Activated naive CD4-positive, alpha-beta T cell treated with anti-CD3 and anti-CD28 coated beads, Interleukin-2, amount 10 ng/mL, durations not matched to agents 7 days and 5 days (primary cell): ENCODE measurements at regions of chr6 and their contacts with region 1.

Region 1: GRCh38 chr6:90478789-90479602 is 107.9 kb downstream of the MAP3K7 start:
- DNase-seq: peak; percentile 87
- H3K4me3 Mint-ChIP-seq: no peak overlapping the region
- H3K27ac Mint-ChIP-seq: peak overlapping the region; percentile 4
- H3K4me1 Mint-ChIP-seq: peaks cover 55% of the 10 kb centered on the region
- H3K27me3 Mint-ChIP-seq: no peaks in the 10 kb centered on the region

Region 2: GRCh38 chr6:90216072-90216977 is 262.7 kb before region 1 on chr6:
- CTCF ChIA-PET with region 1: interaction called, 14 read pairs
- DNase-seq: peak; percentile 56
- H3K4me3 Mint-ChIP-seq: peak overlapping the region; percentile 17
- H3K27ac Mint-ChIP-seq: no peak overlapping the region
- H3K4me1 Mint-ChIP-seq: peaks cover 31% of the 10 kb centered on the region
- H3K27me3 Mint-ChIP-seq: no peaks in the 10 kb centered on the region

Region 3: DNA sequence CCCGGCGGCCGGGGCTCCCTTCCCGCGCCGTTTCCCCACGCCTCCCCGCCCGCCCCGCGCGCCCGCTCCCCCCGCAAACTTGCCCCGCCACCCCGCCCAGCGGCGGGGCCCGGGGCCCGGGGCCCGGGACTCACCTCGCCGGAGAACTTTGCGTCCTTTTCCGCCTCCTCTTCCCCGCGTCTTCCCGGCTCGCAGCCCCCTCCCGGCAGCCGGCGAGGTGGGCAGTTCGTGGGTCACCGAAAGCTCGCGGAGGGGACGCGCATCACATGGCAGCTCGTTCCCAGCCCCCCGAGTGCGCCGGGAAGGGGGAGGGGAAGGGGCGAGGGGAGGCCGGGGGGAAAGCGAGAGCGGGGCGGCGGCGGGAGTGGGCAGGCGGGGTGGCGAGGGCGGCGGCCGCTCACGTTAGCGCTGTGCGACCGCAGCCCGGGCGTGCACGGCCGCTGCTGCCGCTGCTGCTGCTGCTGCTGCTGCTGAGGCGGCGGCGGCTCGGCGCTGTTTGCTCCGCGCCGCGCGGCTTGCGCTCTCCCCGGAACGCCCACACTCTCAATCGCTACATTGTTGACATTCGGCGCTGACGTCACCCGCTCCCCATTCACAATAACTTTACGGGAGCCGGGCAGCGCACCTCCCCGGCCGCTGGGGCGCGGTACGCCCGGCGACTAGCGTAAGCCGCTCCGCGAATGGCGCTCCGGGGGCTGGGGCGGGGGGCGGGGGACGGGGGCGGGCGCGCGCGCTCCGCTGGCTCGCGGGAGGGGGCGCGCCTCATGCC is 182.5 kb before region 1 on chr6 and contains the start of gene BACH2:
- CTCF ChIA-PET with region 1: interaction called, 193 read pairs
- DNase-seq: peak; percentile 97
- H3K4me3 Mint-ChIP-seq: peak within 1 kb of the TSS; percentile 81
- H3K27ac Mint-ChIP-seq: peak within 1 kb of the TSS; percentile 99
- H3K4me1 Mint-ChIP-seq: peaks cover 29% of the 10 kb centered on the region
- H3K27me3 Mint-ChIP-seq: peaks cover 21% of the 10 kb centered on the region

Region 4: GRCh38 chr6:90403489-90404381 is 75.3 kb before region 1 on chr6:
- CTCF ChIA-PET with region 1: interaction called, 104 read pairs
- DNase-seq: no peak
- H3K4me3 Mint-ChIP-seq: no peak overlapping the region
- H3K27ac Mint-ChIP-seq: peak overlapping the region; percentile 77
- H3K4me1 Mint-ChIP-seq: peaks cover 75% of the 10 kb centered on the region
- H3K27me3 Mint-ChIP-seq: no peaks in the 10 kb centered on the region

Region 5: GRCh38 chr6:90444160-90444714 is 34.8 kb before region 1 on chr6:
- CTCF ChIA-PET with region 1: interaction called, 25 read pairs
- DNase-seq: no peak
- H3K4me3 Mint-ChIP-seq: no peak overlapping the region
- H3K27ac Mint-ChIP-seq: peak overlapping the region; percentile 52
- H3K4me1 Mint-ChIP-seq: peaks cover 33% of the 10 kb centered on the region
- H3K27me3 Mint-ChIP-seq: no peaks in the 10 kb centered on the region

Region 6: DNA sequence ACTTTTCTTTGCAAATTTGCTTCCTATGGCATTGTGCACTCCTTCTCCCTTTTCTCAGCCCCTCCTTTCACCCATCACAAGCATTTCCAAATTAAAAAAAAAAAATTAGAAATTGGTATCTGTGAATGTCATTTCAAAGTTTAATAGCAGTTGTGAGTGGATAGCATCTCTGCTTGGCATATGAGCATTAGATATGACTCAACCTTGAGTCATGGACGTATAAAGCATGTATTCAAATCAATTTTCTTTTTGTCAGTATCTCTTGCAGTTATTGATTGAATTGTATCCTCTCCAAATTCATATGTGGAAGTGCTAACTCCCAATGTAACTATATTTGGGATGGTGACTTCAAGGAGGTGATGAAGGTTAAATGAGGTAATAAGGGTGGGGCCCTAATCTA is 167.9 kb after region 1 on chr6:
- CTCF ChIA-PET with region 1: no interaction called
- DNase-seq: no peak
- H3K4me3 Mint-ChIP-seq: no peak overlapping the region
- H3K27ac Mint-ChIP-seq: no peak overlapping the region
- H3K4me1 Mint-ChIP-seq: no peaks in the 10 kb centered on the region
- H3K27me3 Mint-ChIP-seq: no peaks in the 10 kb centered on the region